Naive thymus-derived CD4-positive, alpha-beta T cell (primary cell): ENCODE measurements at regions of chr6 and their contacts with region 1.

Region 1: GRCh38 chr6:109482905-109483735 is at the start of gene ZBTB24:
- DNase-seq: peak; percentile 86 to 92 (median 89)
- ATAC-seq: peak; percentile 94
- H3K4me3 ChIP-seq: peak within 1 kb of the TSS; percentile 79
- H3K4me3 Mint-ChIP-seq: peak within 1 kb of the TSS; percentile 92 to 99 (median 97)
- H3K27ac ChIP-seq: peak within 1 kb of the TSS; percentile 84
- H3K27ac Mint-ChIP-seq: peak within 1 kb of the TSS; percentile 42 to 95 (median 91)
- H3K4me1 ChIP-seq: peaks cover 38 to 39% of the 10 kb centered on the region in 2 donors
- H3K4me1 Mint-ChIP-seq: peaks cover 38 to 55% (median 51%) of the 10 kb centered on the region in 7 donors
- H3K27me3 ChIP-seq: no peaks in the 10 kb centered on the region
- H3K27me3 Mint-ChIP-seq: peaks cover 0 to 7% (median 0%) of the 10 kb centered on the region in 5 donors
- total RNA-seq, gene ZBTB24: 10.2 to 26.6 (median 23.4) TPM

Region 2: DNA sequence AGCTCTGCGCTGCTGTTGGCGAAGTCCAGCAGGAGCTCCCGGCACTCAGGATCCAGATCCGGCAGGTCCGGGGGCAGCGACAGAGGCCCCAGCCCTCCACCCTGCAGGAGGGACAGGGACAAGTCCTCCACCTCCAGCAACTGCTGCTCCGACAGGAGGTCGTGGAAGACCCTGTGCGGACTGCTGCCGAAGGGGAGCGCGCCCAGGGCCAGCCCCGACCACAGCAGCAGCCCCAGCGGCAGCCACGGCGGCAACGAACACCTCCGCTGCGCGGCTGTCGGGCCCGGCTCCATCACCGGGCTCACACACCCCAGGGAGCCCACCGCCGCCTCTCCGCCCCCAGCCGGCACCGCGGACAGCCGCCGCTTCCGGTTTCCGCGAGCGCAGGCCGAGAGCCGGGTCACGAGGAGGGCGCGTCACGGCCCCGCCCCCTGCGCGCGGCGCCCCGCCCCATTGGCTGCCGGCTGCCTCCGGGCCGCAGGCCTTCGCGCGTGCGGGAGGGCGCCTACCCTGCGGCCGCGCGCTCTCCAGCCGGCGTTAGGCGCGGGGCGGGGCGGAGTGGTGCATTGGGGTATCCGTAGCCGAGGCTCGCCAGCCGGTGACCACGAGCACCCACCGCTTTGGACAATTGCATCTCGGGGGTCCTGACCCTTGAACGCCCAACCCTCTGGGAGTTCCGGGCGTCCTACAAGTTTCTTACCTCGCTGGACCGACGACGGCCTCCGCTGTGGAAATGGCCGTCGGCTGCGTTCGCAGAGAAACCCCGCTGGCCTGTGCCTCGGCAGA is 1408.6 kb before region 1 on chr6 and contains the start of gene OSTM1:
- CTCF ChIA-PET with region 1: no interaction called
- POLR2A ChIA-PET with region 1: no interaction called
- intact Hi-C with region 1: loop called in 1 of 2 experiments (anchors 10 kb)
- DNase-seq: peak; percentile 88 to 98 (median 94)
- ATAC-seq: peak; percentile 99
- H3K4me3 ChIP-seq: peak within 1 kb of the TSS; percentile 99
- H3K4me3 Mint-ChIP-seq: peak within 1 kb of the TSS; percentile 84 to 94 (median 90)
- H3K27ac ChIP-seq: peak within 1 kb of the TSS; percentile 89
- H3K27ac Mint-ChIP-seq: peak within 1 kb of the TSS; percentile 81 to 98 (median 91)
- H3K4me1 ChIP-seq: peaks cover 18% of the 10 kb centered on the region in 2 donors
- H3K4me1 Mint-ChIP-seq: peaks cover 11 to 35% (median 23%) of the 10 kb centered on the region in 7 donors
- H3K27me3 ChIP-seq: no peaks in the 10 kb centered on the region
- H3K27me3 Mint-ChIP-seq: peaks cover 0 to 25% (median 4%) of the 10 kb centered on the region in 5 donors
- total RNA-seq, gene OSTM1: 25.0 to 48.9 (median 36.7) TPM

Region 3: GRCh38 chr6:109440331-109441068 is 42.6 kb before region 1 on chr6 and contains the starts of genes PPIL6 and SMPD2:
- CTCF ChIA-PET with region 1: interaction called, 4 read pairs
- POLR2A ChIA-PET with region 1: interaction called, 13 read pairs
- intact Hi-C with region 1: loop called (anchors 1 kb)
- DNase-seq: peak; percentile 63 to 85 (median 77)
- ATAC-seq: peak; percentile 91
- H3K4me3 ChIP-seq: peak within 1 kb of the TSS; percentile 65
- H3K4me3 Mint-ChIP-seq: peak within 1 kb of the TSS; percentile 90 to 95 (median 94)
- H3K27ac ChIP-seq: peak within 1 kb of the TSS; percentile 98
- H3K27ac Mint-ChIP-seq: peak within 1 kb of the TSS; percentile 87 to 97 (median 93)
- H3K4me1 ChIP-seq: peaks cover 11% of the 10 kb centered on the region in 2 donors
- H3K4me1 Mint-ChIP-seq: peaks cover 10 to 32% (median 21%) of the 10 kb centered on the region in 7 donors
- H3K27me3 ChIP-seq: no peaks in the 10 kb centered on the region
- H3K27me3 Mint-ChIP-seq: peaks cover 0 to 2% (median 0%) of the 10 kb centered on the region in 5 donors
- total RNA-seq, gene PPIL6: 0.13 to 1.9 (median 0.40) TPM in 4 of 5 experiments, not detected in the other
- total RNA-seq, gene SMPD2: 16.9 to 33.7 (median 19.6) TPM

Region 4: GRCh38 chr6:109515781-109516409 is 32.8 kb after region 1 on chr6:
- CTCF ChIA-PET with region 1: interaction called, 3 read pairs
- POLR2A ChIA-PET with region 1: interaction called, 5 read pairs
- intact Hi-C with region 1: loop called (anchors 2 to 5 kb)
- DNase-seq: peak in 3 of 9 donors; percentile 11 to 26 (median 13)
- ATAC-seq: no peak
- H3K4me3 ChIP-seq: peak overlapping the region; percentile 61
- H3K4me3 Mint-ChIP-seq: peak overlapping the region; percentile 61 to 86 (median 72)
- H3K27ac ChIP-seq: peak overlapping the region; percentile 33
- H3K27ac Mint-ChIP-seq: peak overlapping the region; percentile 23 to 81 (median 55)
- H3K4me1 ChIP-seq: peaks cover 15 to 19% of the 10 kb centered on the region in 2 donors
- H3K4me1 Mint-ChIP-seq: peaks cover 14 to 36% (median 28%) of the 10 kb centered on the region in 7 donors
- H3K27me3 ChIP-seq: no peaks in the 10 kb centered on the region
- H3K27me3 Mint-ChIP-seq: peaks cover 0 to 1% (median 0%) of the 10 kb centered on the region in 5 donors

Region 5: GRCh38 chr6:110063594-110064263 is 580.6 kb after region 1 on chr6:
- CTCF ChIA-PET with region 1: no interaction called
- POLR2A ChIA-PET with region 1: no interaction called
- intact Hi-C with region 1: no loop called
- DNase-seq: no peak
- ATAC-seq: no peak
- H3K4me3 ChIP-seq: no peak overlapping the region
- H3K4me3 Mint-ChIP-seq: no peak overlapping the region
- H3K27ac ChIP-seq: no peak overlapping the region
- H3K27ac Mint-ChIP-seq: peak overlapping the region in 1 of 9 donors; percentile 60
- H3K4me1 ChIP-seq: no peaks in the 10 kb centered on the region
- H3K4me1 Mint-ChIP-seq: peaks cover 0 to 3% (median 0%) of the 10 kb centered on the region in 7 donors
- H3K27me3 ChIP-seq: peaks cover 0 to 5% of the 10 kb centered on the region in 2 donors
- H3K27me3 Mint-ChIP-seq: peaks cover 16 to 53% (median 41%) of the 10 kb centered on the region in 5 donors

Region 6: GRCh38 chr6:110147870-110148269 is 664.8 kb after region 1 on chr6:
- CTCF ChIA-PET with region 1: no interaction called
- POLR2A ChIA-PET with region 1: no interaction called
- intact Hi-C with region 1: no loop called
- DNase-seq: no peak
- ATAC-seq: no peak
- H3K4me3 ChIP-seq: no peak overlapping the region
- H3K4me3 Mint-ChIP-seq: no peak overlapping the region
- H3K27ac ChIP-seq: no peak overlapping the region
- H3K27ac Mint-ChIP-seq: no peak overlapping the region
- H3K4me1 ChIP-seq: no peaks in the 10 kb centered on the region
- H3K4me1 Mint-ChIP-seq: peaks cover 0 to 4% (median 0%) of the 10 kb centered on the region in 7 donors
- H3K27me3 ChIP-seq: no peaks in the 10 kb centered on the region
- H3K27me3 Mint-ChIP-seq: peaks cover 2 to 40% (median 16%) of the 10 kb centered on the region in 5 donors

Region 7: DNA sequence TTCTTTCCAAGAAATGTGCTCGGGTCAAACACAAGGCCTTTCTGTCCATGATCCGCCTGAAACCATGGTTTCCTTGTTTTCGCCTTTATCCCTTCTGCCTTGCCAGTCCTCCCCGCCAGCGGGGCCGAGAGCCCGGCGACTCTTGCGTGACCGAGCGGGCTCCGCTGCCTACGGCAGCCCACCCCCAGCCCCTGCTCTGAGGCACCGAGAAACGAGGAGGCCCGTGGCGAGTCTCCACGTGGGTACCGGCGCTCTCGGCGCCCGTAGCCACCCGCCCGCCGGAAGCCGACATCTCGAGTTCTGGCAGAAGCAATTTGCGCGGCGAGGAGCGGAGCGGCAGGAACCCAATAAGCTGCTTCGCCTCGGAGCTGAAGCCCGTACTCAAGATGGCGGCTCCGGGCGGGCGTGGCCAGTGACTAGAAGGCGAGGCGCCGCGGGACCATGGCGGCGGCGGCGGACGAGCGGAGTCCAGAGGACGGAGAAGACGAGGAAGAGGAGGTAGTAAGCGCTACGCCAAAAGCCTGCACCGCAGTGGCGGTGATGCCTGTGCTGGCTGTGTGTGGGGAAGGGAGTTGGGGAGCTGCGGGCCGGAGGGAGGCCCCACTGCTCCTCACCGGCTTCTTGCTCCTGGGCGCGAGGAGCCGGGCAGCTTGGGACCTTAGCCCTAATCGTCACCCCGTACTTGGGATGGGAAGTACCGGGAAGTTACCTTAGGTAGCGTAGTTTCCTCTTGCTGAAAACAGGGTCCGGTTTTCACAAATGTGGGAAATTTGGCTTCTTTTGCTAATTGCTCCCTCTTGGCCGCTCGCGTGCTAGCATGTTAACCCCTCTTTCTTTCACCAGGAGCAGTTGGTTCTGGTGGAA is 1475.4 kb after region 1 on chr6 and contains the start of gene GTF3C6:
- CTCF ChIA-PET with region 1: no interaction called
- POLR2A ChIA-PET with region 1: no interaction called
- intact Hi-C with region 1: loop called in 1 of 2 experiments (anchors 10 kb)
- DNase-seq: peak; percentile 85 to 94 (median 91)
- ATAC-seq: peak; percentile 99
- H3K4me3 ChIP-seq: peak within 1 kb of the TSS; percentile 86
- H3K4me3 Mint-ChIP-seq: peak within 1 kb of the TSS; percentile 95 to 99 (median 96)
- H3K27ac ChIP-seq: peak within 1 kb of the TSS; percentile 81
- H3K27ac Mint-ChIP-seq: peak within 1 kb of the TSS; percentile 96 to 99 (median 97)
- H3K4me1 ChIP-seq: peaks cover 4% of the 10 kb centered on the region in 2 donors
- H3K4me1 Mint-ChIP-seq: peaks cover 13 to 27% (median 20%) of the 10 kb centered on the region in 7 donors
- H3K27me3 ChIP-seq: no peaks in the 10 kb centered on the region
- H3K27me3 Mint-ChIP-seq: peaks cover 0 to 7% (median 0%) of the 10 kb centered on the region in 5 donors
- total RNA-seq, gene GTF3C6: 18.1 to 100 (median 29.9) TPM